ENCODE measurements at regions of chr3 and their contacts with region 1.

Region 1: GRCh38 chr3:156674046-156674910 is at the start of gene TIPARP:
- DNase-seq: peak; percentile 100
- H3K4me3 Mint-ChIP-seq: peak within 1 kb of the TSS; percentile 91
- H3K27ac Mint-ChIP-seq: peak within 1 kb of the TSS; percentile 94
- H3K4me1 Mint-ChIP-seq: peaks cover 39% of the 10 kb centered on the region
- H3K27me3 Mint-ChIP-seq: no peaks in the 10 kb centered on the region
- total RNA-seq, gene TIPARP: 17.7 and 18.7 TPM in 2 replicates

Region 2: DNA sequence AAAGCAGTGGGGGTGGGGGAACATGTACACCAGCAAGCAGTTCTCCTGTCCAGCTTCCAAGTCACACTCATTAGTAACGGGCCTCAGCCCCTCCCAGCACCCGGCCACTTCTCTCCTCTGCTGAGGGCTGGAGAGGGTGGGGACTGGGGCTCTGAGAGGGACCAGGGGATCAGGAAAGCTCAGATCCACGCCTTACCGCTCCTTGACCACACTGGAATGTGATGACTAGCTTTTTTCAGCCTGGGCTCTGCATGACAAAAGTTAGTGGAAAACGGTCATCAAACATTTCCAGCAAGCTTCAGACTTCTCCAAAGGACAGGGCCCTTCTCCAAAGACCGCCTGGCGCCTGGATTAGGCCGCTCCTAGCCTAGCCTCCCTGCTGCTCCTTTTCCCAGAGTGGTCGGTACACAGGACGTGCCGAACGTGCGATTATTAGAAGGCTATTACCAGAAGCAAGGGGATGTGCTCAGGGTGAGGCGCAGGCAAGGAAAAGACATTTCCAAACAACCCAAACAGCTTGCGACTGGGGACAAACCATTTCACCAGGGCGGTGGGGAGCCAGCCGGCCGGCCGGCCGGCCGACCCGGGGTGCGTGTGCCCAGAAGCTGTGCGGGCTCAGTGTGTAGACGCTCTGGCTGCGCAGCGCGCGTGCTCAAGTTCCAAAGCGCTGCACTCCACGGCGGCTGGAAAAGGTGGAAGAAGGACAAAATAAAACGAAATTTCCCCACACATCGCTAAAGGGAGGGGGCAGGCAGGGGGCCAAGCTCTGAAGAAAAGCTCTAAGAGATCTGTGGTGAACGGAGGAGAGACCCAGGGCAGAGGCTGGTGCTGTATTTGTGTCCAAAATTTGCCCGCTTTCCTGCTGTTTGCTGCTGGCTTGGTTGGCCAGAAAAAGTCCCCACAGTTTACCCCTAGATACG is 68.3 kb before region 1 on chr3:
- intact Hi-C with region 1: loop called (anchors 2 kb)
- DNase-seq: no peak
- H3K4me3 Mint-ChIP-seq: peak overlapping the region; percentile 86
- H3K27ac Mint-ChIP-seq: no peak overlapping the region
- H3K4me1 Mint-ChIP-seq: peaks cover 33% of the 10 kb centered on the region
- H3K27me3 Mint-ChIP-seq: peaks cover 22% of the 10 kb centered on the region

Region 3: DNA sequence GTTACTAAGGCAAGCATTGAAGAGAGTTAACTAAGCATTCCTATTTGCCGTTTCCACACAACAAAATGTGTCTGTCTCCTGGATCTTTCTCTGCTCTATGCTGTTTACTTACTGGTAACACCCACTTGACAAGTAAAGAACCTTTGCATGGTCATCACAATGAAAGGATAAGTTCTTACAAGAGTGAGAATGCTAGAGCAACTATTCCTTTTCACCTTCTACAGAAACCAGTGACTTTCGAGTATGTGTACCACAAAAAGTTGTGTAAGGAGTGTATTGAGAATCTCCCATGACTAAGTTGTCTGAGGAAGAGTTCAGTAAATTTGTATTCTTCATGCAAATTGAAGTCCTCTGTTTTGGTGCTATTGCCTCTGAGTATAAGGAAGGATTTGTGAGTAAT is 10.9 kb after region 1 on chr3:
- intact Hi-C with region 1: loop called (anchors 1 kb)
- DNase-seq: no peak
- H3K4me3 Mint-ChIP-seq: peak overlapping the region; percentile 59
- H3K27ac Mint-ChIP-seq: peak overlapping the region; percentile 66
- H3K4me1 Mint-ChIP-seq: peaks cover 73% of the 10 kb centered on the region
- H3K27me3 Mint-ChIP-seq: no peaks in the 10 kb centered on the region

Region 4: GRCh38 chr3:156816800-156817645 is 142.7 kb after region 1 on chr3:
- intact Hi-C with region 1: loop called (anchors 1 kb)
- DNase-seq: peak; percentile 97
- H3K4me3 Mint-ChIP-seq: peak overlapping the region; percentile 92
- H3K27ac Mint-ChIP-seq: peak overlapping the region; percentile 98
- H3K4me1 Mint-ChIP-seq: peaks cover 52% of the 10 kb centered on the region
- H3K27me3 Mint-ChIP-seq: no peaks in the 10 kb centered on the region

Region 5: DNA sequence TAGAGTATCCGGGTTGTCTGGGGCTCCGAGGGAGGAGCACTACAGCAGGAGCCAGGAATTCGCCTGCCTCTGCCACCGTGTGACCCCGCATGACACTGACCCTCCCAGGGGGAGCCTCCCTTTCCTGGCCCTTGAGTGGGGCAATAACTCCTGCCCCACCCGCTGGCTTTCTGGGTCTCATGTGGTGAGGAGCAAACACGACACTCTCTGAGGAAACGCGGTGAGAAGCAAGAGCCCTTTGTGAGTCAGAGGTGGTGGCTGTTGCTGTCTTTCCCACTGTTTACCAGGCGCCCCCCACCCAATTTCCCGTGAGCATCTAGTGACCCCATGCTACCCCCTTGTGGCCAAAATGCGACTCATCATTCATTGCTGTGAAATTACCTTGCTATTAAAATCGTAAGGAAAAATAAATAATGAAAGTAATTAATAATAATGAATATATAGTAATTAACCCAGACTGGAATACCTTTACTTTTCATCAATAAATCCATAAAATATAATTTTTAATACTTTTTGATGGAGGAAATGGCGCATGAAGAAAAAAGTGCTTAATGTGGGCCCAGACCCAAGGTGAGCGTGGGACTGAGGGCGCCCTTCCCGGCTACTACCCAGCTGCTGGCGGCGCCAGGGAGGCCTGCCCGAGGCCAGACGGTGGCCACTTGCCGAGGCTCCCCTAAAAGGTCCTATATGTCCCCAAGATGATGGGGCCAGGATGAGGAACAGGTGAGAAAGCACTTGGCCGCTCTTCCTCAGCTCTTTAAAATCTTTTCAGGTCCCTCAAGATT is 456.4 kb after region 1 on chr3:
- intact Hi-C with region 1: loop called (anchors 2 kb)
- DNase-seq: peak; percentile 91
- H3K4me3 Mint-ChIP-seq: peak overlapping the region; percentile 78
- H3K27ac Mint-ChIP-seq: peak overlapping the region; percentile 98
- H3K4me1 Mint-ChIP-seq: peaks cover 82% of the 10 kb centered on the region
- H3K27me3 Mint-ChIP-seq: no peaks in the 10 kb centered on the region

Measured in activated CD4-positive, alpha-beta T cell treated with anti-CD3 and anti-CD28 coated beads, Interleukin-2, amount 10 ng/mL, durations not matched to agents 24 days and 14 days (primary cell).